H1 (cell line): ENCODE measurements at regions of chr2 and their contacts with region 1.

Region 1: DNA sequence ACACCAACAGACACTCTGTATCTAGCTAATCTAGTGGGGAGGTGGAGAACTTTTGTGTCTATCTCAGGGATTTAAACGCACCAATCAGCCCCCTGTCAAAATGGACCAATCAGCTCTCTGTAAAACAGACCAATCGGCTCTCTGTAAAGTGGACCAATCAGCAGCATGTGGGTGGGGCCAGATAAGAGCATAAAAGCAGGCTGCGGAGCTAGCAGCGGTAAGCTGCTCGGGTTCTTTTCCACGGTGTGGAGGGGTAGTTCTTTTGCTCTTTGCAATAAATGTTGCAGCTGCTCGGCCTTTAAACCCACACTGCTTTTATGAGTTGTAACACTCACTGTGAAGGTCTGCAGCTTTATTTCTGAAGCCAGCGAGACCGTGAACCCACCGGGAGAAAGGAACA is 51.3 kb upstream of the FOXI3 start:
- DNase-seq: no peak
- H3K4me3 ChIP-seq: no peak overlapping the region
- H3K27ac ChIP-seq: no peak overlapping the region
- H3K4me1 ChIP-seq: no peaks in the 10 kb centered on the region; a peak in 2 of 7 replicates
- H3K27me3 ChIP-seq: no peaks in the 10 kb centered on the region
- CTCF ChIP-seq: no peak
- EP300 ChIP-seq: no peak
- POLR2A ChIP-seq: peak in 1 of 2 experiments; percentile 30; a peak in 1 of 3 replicates
- RAD21 ChIP-seq: no peak

Region 2: GRCh38 chr2:88377641-88377991 is 126.2 kb before region 1 on chr2:
- CTCF ChIA-PET with region 1: no interaction called
- POLR2A ChIA-PET with region 1: no interaction called
- DNase-seq: no peak
- H3K4me3 ChIP-seq: no peak overlapping the region
- H3K27ac ChIP-seq: no peak overlapping the region
- H3K4me1 ChIP-seq: no peaks in the 10 kb centered on the region; a peak in 1 of 7 replicates
- H3K27me3 ChIP-seq: no peaks in the 10 kb centered on the region
- CTCF ChIP-seq: no peak
- EP300 ChIP-seq: no peak
- POLR2A ChIP-seq: no peak
- RAD21 ChIP-seq: no peak

Region 3: DNA sequence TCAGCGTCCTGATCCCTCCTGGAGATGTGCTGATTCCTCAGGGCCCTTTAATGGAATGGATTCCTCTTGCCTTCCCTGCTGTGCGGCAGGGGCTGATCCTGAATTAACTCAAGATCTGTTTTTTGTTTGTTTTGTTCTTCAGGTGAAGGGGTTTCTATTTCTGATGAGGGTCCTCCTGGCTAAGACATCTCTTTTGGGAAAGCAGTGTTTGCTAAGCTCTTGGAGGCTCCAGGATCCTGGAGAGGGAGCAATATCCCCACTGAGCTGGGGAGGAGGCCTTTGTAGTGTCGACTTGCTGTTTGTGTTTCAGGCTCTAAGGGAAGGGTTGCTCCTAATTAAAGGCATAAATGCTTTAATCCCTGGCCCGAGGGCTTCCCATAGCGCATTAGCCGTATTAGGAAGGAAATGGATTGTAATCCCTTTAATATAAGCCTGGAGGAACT is 14.0 kb after region 1 on chr2:
- CTCF ChIA-PET with region 1: interaction called, 29 read pairs
- POLR2A ChIA-PET with region 1: interaction called, 3 read pairs
- DNase-seq: peak in 1 of 2 experiments; percentile 13
- H3K4me3 ChIP-seq: no peak overlapping the region; a peak in 1 of 8 replicates
- H3K27ac ChIP-seq: no peak overlapping the region; the same call in 1 of the 2 replicates
- H3K4me1 ChIP-seq: peaks cover 0 to 18% (median 11%) of the 10 kb centered on the region in 4 experiments; a peak in 6 of 7 replicates
- H3K27me3 ChIP-seq: no peaks in the 10 kb centered on the region; a peak in 1 of 7 replicates
- CTCF ChIP-seq: peak in 1 of 3 experiments; percentile 11; a peak in 1 of 4 replicates
- EP300 ChIP-seq: no peak
- POLR2A ChIP-seq: no peak
- RAD21 ChIP-seq: peak; percentile 16 to 28; a peak in 2 of 4 replicates